OCI-LY7 (cell line): ENCODE measurements at regions of chr4 and their contacts with region 1.

Region 1: GRCh38 chr4:163587867-163588266 is 93.4 kb downstream of the TMA16 start:
- DNase-seq: peak; percentile 87
- H3K4me3 ChIP-seq: peak overlapping the region; percentile 17
- H3K27ac ChIP-seq: peak overlapping the region; percentile 64
- H3K4me1 ChIP-seq: peaks cover 58% of the 10 kb centered on the region
- CTCF ChIP-seq: peak; percentile 92

Region 2: GRCh38 chr4:163568843-163569242 is 19.0 kb before region 1 on chr4:
- CTCF ChIA-PET with region 1: no interaction called
- POLR2A ChIA-PET with region 1: interaction called, 12 read pairs
- intact Hi-C with region 1: no loop called
- DNase-seq: peak; percentile 63
- H3K4me3 ChIP-seq: no peak overlapping the region
- H3K27ac ChIP-seq: peak overlapping the region; percentile 15
- H3K4me1 ChIP-seq: peaks cover 18% of the 10 kb centered on the region
- CTCF ChIP-seq: no peak

Region 3: GRCh38 chr4:163598028-163598427 is 10.2 kb after region 1 on chr4:
- CTCF ChIA-PET with region 1: interaction called, 4 read pairs
- POLR2A ChIA-PET with region 1: interaction called, 58 read pairs
- intact Hi-C with region 1: no loop called
- DNase-seq: peak; percentile 26
- H3K4me3 ChIP-seq: no peak overlapping the region
- H3K27ac ChIP-seq: peak overlapping the region; percentile 61
- H3K4me1 ChIP-seq: peaks cover 63% of the 10 kb centered on the region
- CTCF ChIP-seq: no peak